Naive thymus-derived CD4-positive, alpha-beta T cell (primary cell): ENCODE measurements at regions of chr5 and their contacts with region 1.

Region 1: GRCh38 chr5:150449517-150450339 is at the start of gene RPS14:
- DNase-seq: peak; percentile 89 to 98 (median 97)
- ATAC-seq: peak; percentile 97
- H3K4me3 ChIP-seq: peak within 1 kb of the TSS; percentile 68
- H3K4me3 Mint-ChIP-seq: peak within 1 kb of the TSS; percentile 89 to 100 (median 96)
- H3K27ac ChIP-seq: peak within 1 kb of the TSS; percentile 100
- H3K27ac Mint-ChIP-seq: peak within 1 kb of the TSS; percentile 97 to 100 (median 100)
- H3K4me1 ChIP-seq: peaks cover 18 to 23% of the 10 kb centered on the region in 2 donors
- H3K4me1 Mint-ChIP-seq: peaks cover 21 to 44% (median 37%) of the 10 kb centered on the region in 7 donors
- H3K27me3 ChIP-seq: no peaks in the 10 kb centered on the region
- H3K27me3 Mint-ChIP-seq: no peaks in the 10 kb centered on the region
- total RNA-seq, gene RPS14: 2,331 to 7,378 (median 6,414) TPM

Region 2: GRCh38 chr5:150000256-150000989 is 449.3 kb before region 1 on chr5 and contains the starts of genes HMGXB3 and TIGD6:
- CTCF ChIA-PET with region 1: no interaction called
- POLR2A ChIA-PET with region 1: interaction called, 3 read pairs
- intact Hi-C with region 1: loop called in 1 of 2 experiments (anchors 1 kb)
- DNase-seq: peak; percentile 64 to 87 (median 74)
- ATAC-seq: peak; percentile 83
- H3K4me3 ChIP-seq: peak within 1 kb of the TSS; percentile 76
- H3K4me3 Mint-ChIP-seq: peak within 1 kb of the TSS; percentile 86 to 99 (median 93)
- H3K27ac ChIP-seq: peak within 1 kb of the TSS; percentile 80
- H3K27ac Mint-ChIP-seq: peak within 1 kb of the TSS; percentile 75 to 98 (median 94)
- H3K4me1 ChIP-seq: peaks cover 18 to 23% of the 10 kb centered on the region in 2 donors
- H3K4me1 Mint-ChIP-seq: peaks cover 33 to 55% (median 46%) of the 10 kb centered on the region in 7 donors
- H3K27me3 ChIP-seq: no peaks in the 10 kb centered on the region
- H3K27me3 Mint-ChIP-seq: no peaks in the 10 kb centered on the region
- total RNA-seq, gene HMGXB3: 27.2 to 40.6 (median 34.5) TPM
- total RNA-seq, gene TIGD6: 2.3 to 7.4 (median 2.8) TPM

Region 3: GRCh38 chr5:150320048-150320555 is 129.6 kb before region 1 on chr5:
- CTCF ChIA-PET with region 1: no interaction called
- POLR2A ChIA-PET with region 1: no interaction called
- intact Hi-C with region 1: no loop called
- DNase-seq: no peak
- ATAC-seq: no peak
- H3K4me3 ChIP-seq: no peak overlapping the region
- H3K4me3 Mint-ChIP-seq: no peak overlapping the region
- H3K27ac ChIP-seq: no peak overlapping the region
- H3K27ac Mint-ChIP-seq: no peak overlapping the region
- H3K4me1 ChIP-seq: peaks cover 0 to 5% of the 10 kb centered on the region in 2 donors
- H3K4me1 Mint-ChIP-seq: peaks cover 0 to 6% (median 0%) of the 10 kb centered on the region in 7 donors
- H3K27me3 ChIP-seq: no peaks in the 10 kb centered on the region
- H3K27me3 Mint-ChIP-seq: peaks cover 0 to 5% (median 0%) of the 10 kb centered on the region in 5 donors

Region 4: DNA sequence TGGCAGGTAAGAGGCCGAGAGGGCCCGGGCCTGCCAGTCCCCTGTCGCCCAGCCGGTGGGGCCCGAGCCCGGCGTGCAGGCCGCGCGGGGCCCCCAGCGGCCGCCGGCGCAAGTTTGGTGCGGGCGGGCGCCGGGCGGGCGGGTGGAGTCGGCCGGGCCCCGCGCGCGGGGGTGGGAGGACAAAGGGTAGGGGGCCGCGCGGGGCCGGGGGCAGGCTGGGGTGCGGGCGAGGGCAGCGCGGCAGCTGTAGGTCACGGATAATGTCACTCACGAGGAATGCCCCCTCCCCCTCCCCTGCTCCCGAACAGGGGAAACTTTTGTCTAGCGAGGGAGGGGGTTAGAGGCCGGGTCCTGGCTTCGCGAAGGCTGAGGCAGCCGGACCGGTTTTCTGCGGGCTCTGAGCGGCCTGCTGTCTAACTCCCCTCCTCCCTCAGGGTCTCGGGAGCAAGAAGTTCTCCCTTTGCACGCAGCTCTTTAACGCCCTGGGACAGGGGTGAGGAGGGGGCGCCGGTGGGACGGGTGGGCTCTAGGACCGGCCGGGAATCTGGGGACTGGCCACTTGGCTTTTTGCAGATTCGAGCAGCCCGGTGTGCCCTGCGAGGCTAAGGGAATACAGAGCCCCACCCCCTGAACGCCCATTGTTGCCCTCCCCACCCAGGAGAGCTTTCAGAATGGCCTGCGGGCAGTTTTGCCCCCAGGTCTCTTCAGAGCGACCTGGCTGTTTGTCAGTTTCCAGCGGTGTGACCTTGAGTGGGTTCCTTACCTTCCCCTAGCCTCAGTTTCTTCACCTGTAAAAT is 36.9 kb after region 1 on chr5:
- CTCF ChIA-PET with region 1: no interaction called
- POLR2A ChIA-PET with region 1: interaction called, 3 read pairs
- intact Hi-C with region 1: loop called in 1 of 2 experiments (anchors 2 kb)
- DNase-seq: peak; percentile 23 to 67 (median 59)
- ATAC-seq: peak; percentile 46
- H3K4me3 ChIP-seq: peak overlapping the region; percentile 48
- H3K4me3 Mint-ChIP-seq: peak overlapping the region; percentile 55 to 79 (median 73)
- H3K27ac ChIP-seq: peak overlapping the region; percentile 33
- H3K27ac Mint-ChIP-seq: peak overlapping the region in 8 of 9 donors; percentile 16 to 84 (median 62)
- H3K4me1 ChIP-seq: peaks cover 3 to 5% of the 10 kb centered on the region in 2 donors
- H3K4me1 Mint-ChIP-seq: peaks cover 7 to 25% (median 15%) of the 10 kb centered on the region in 7 donors
- H3K27me3 ChIP-seq: no peaks in the 10 kb centered on the region
- H3K27me3 Mint-ChIP-seq: peaks cover 0 to 36% (median 4%) of the 10 kb centered on the region in 5 donors

Region 5: GRCh38 chr5:150656191-150657132 is 206.7 kb after region 1 on chr5:
- CTCF ChIA-PET with region 1: interaction called, 4 read pairs
- POLR2A ChIA-PET with region 1: interaction called, 4 read pairs
- intact Hi-C with region 1: loop called in 1 of 2 experiments (anchors 2 kb)
- DNase-seq: peak; percentile 74 to 88 (median 83)
- ATAC-seq: peak; percentile 96
- H3K4me3 ChIP-seq: peak overlapping the region; percentile 75
- H3K4me3 Mint-ChIP-seq: peak overlapping the region; percentile 75 to 90 (median 84)
- H3K27ac ChIP-seq: peak overlapping the region; percentile 63
- H3K27ac Mint-ChIP-seq: peak overlapping the region in 7 of 9 donors; percentile 17 to 74 (median 54)
- H3K4me1 ChIP-seq: peaks cover 0 to 4% of the 10 kb centered on the region in 2 donors
- H3K4me1 Mint-ChIP-seq: peaks cover 0 to 12% (median 5%) of the 10 kb centered on the region in 7 donors
- H3K27me3 ChIP-seq: no peaks in the 10 kb centered on the region
- H3K27me3 Mint-ChIP-seq: peaks cover 0 to 19% (median 0%) of the 10 kb centered on the region in 5 donors